ENCODE measurements at regions of chr6 and their contacts with region 1.

Region 1: DNA sequence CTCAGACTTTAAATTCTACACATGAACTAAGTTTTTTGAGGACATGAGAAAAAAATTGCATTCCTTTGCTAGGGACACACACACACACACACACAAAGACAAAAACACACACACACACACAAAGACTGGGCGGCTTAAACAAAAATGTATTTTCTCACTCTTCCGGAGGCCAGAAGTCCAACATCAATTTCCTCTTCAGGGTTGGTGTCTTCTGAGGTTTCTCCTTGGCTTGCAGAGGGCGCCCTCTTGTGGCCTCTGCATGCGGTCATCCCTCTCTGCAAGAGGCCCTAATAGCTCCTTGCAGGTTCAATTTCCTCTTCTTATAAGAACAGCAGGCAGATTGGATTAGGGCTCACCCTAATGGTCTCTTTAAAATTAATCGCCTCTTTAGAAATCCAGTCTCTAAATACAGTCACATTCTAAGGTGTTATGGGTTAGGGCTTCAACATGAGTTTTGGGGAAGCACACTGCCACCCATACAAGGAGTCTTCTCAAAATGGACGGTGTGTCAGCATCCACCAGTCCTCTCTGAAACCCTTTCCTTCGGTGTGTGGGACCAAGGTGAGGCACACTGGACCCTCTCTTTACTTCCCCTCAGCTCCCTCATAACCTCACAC is 61.4 kb downstream of the GPR6 start:
- DNase-seq: peak; percentile 90
- H3K4me3 Mint-ChIP-seq: peak overlapping the region; percentile 82
- H3K27ac Mint-ChIP-seq: peak overlapping the region; percentile 86
- H3K4me1 Mint-ChIP-seq: peaks cover 10% of the 10 kb centered on the region
- H3K27me3 Mint-ChIP-seq: no peaks in the 10 kb centered on the region

Region 2: DNA sequence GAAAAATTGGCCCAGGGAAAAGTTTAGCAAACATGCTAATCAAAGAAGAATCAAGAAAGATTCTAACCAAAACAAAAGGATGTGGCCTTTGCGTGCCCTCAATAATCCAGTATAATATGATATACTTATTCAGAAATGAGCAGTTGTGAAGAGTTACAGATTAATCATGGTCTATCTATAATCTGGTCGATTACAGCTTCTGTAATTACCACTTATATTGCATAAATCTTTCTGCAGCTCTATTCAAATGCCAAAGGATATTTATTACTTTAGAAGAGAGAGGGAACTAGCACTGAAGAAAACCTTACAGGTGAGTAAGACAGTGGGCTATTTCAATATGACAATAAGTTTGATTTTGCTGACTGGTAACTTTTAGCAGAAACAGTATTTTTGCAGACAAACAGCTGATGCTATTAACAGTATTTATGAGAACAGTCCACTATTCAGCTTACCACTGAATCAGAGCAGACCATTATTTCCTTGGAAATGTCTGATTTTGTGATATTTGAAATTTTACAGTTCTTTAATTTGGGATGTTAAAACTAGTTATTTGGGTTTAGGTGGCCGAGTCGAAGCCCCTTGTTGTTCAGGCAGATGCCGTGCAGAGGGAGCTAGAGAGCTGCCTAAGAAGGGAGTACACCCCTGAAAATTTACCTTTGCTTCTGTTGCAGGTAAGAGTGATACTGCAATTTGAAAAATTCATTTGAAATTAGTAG is 851.9 kb before region 1 on chr6:
- CTCF ChIA-PET with region 1: interaction called, 11 read pairs
- POLR2A ChIA-PET with region 1: no interaction called
- intact Hi-C with region 1: loop called (anchors 10 kb)
- DNase-seq: peak; percentile 69
- H3K4me3 Mint-ChIP-seq: no peak overlapping the region
- H3K27ac Mint-ChIP-seq: no peak overlapping the region
- H3K4me1 Mint-ChIP-seq: peaks cover 2% of the 10 kb centered on the region
- H3K27me3 Mint-ChIP-seq: peaks cover 19% of the 10 kb centered on the region

Region 3: GRCh38 chr6:109595998-109596397 is 443.5 kb before region 1 on chr6:
- CTCF ChIA-PET with region 1: interaction called, 9 read pairs
- POLR2A ChIA-PET with region 1: no interaction called
- intact Hi-C with region 1: loop called (anchors 1 kb)
- DNase-seq: no peak
- H3K4me3 Mint-ChIP-seq: no peak overlapping the region
- H3K27ac Mint-ChIP-seq: no peak overlapping the region
- H3K4me1 Mint-ChIP-seq: peaks cover 3% of the 10 kb centered on the region
- H3K27me3 Mint-ChIP-seq: no peaks in the 10 kb centered on the region

Region 4: DNA sequence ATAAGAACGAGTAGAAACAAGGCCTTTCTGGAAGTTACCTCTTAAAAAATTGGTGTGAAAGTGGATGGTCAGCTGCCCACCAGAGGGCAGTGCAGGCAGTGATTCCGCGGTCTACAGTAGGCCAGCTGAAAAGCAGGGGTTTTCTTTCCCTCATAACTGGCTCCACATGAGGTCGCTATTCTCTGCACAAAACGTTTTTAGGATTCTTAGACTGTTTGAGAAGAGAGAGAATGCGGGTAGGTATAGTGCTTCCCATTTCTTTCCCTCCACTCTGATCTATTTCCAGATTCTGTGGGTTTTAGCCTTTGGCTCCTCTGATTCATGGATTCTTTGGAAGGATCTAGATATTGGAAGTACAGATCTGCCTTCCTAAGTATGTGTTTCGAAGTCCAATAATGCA is 334.2 kb before region 1 on chr6:
- CTCF ChIA-PET with region 1: interaction called, 161 read pairs
- POLR2A ChIA-PET with region 1: interaction called, 5 read pairs
- intact Hi-C with region 1: loop called (anchors 1 kb)
- DNase-seq: peak; percentile 87
- H3K4me3 Mint-ChIP-seq: no peak overlapping the region
- H3K27ac Mint-ChIP-seq: no peak overlapping the region
- H3K4me1 Mint-ChIP-seq: peaks cover 2% of the 10 kb centered on the region
- H3K27me3 Mint-ChIP-seq: no peaks in the 10 kb centered on the region

Region 5: DNA sequence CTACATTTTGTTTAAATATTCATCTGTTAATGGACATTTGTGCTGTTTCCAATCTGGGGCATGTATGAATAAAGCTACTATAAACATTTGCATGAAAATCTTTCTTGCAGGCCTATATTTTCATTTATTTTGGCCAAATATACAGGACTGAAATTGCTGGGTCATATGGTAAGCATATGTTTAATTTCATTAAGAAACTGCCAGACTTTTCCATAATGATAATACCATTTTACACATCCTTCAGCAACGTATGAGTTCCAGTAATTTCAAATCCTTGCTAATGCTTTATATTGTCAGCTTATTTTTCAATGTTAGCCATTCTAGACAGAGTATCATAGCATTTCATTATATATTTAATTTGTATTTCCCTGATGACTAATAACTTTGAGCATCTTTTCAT is 10.3 kb before region 1 on chr6:
- CTCF ChIA-PET with region 1: interaction called, 51 read pairs
- POLR2A ChIA-PET with region 1: no interaction called
- intact Hi-C with region 1: no loop called
- DNase-seq: no peak
- H3K4me3 Mint-ChIP-seq: no peak overlapping the region
- H3K27ac Mint-ChIP-seq: no peak overlapping the region
- H3K4me1 Mint-ChIP-seq: no peaks in the 10 kb centered on the region
- H3K27me3 Mint-ChIP-seq: no peaks in the 10 kb centered on the region

Region 6: GRCh38 chr6:110179401-110180227 is 140.1 kb after region 1 on chr6 and contains the start of gene WASF1:
- CTCF ChIA-PET with region 1: interaction called, 5 read pairs
- POLR2A ChIA-PET with region 1: no interaction called
- intact Hi-C with region 1: loop called (anchors 1 kb)
- DNase-seq: peak; percentile 94
- H3K4me3 Mint-ChIP-seq: peak within 1 kb of the TSS; percentile 85
- H3K27ac Mint-ChIP-seq: no peak within 1 kb of the TSS
- H3K4me1 Mint-ChIP-seq: peaks cover 5% of the 10 kb centered on the region
- H3K27me3 Mint-ChIP-seq: peaks cover 10% of the 10 kb centered on the region
- total RNA-seq, gene WASF1: 1.9 to 2.6 TPM

Region 7: DNA sequence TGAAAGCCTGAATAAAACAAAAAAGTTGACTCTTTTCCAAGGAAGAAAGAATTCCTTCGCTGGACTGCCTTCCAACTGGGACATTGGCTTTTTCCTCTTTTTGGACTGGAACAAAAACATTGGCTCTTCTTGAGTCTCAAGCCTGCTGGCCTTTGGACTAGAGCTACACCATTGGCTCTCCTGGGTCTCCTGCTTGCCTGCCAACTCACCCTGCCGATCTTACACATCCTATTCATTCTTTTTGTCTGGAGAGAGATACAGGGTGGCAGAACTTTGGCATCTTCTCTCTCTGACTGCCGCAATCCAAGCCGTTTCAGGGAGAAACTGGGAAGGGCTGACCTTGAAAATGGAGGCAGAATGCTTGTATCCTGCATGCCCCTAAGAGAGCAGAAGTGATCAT is 355.7 kb after region 1 on chr6:
- CTCF ChIA-PET with region 1: interaction called, 75 read pairs
- POLR2A ChIA-PET with region 1: no interaction called
- intact Hi-C with region 1: loop called (anchors 1 kb)
- DNase-seq: no peak
- H3K4me3 Mint-ChIP-seq: no peak overlapping the region
- H3K27ac Mint-ChIP-seq: no peak overlapping the region
- H3K4me1 Mint-ChIP-seq: peaks cover 2% of the 10 kb centered on the region
- H3K27me3 Mint-ChIP-seq: peaks cover 3% of the 10 kb centered on the region